ENCODE measurements at regions of chr12 and their contacts with region 1.

Region 1: GRCh38 chr12:49088190-49088931 is 6.2 kb downstream of the DHH start:
- DNase-seq: peak; percentile 60
- H3K4me3 ChIP-seq: peak overlapping the region; percentile 38
- H3K27ac ChIP-seq: no peak overlapping the region
- H3K4me1 ChIP-seq: peaks cover 55% of the 10 kb centered on the region
- H3K27me3 ChIP-seq: peaks cover 49% of the 10 kb centered on the region
- CTCF ChIP-seq: peak; percentile 93

Region 2: GRCh38 chr12:49121047-49121696 is 32.8 kb after region 1 on chr12:
- intact Hi-C with region 1: loop called (anchors 5 kb)
- DNase-seq: peak; percentile 32
- H3K4me3 ChIP-seq: no peak overlapping the region
- H3K27ac ChIP-seq: no peak overlapping the region
- H3K4me1 ChIP-seq: no peaks in the 10 kb centered on the region
- H3K27me3 ChIP-seq: no peaks in the 10 kb centered on the region
- CTCF ChIP-seq: peak; percentile 75

Region 3: DNA sequence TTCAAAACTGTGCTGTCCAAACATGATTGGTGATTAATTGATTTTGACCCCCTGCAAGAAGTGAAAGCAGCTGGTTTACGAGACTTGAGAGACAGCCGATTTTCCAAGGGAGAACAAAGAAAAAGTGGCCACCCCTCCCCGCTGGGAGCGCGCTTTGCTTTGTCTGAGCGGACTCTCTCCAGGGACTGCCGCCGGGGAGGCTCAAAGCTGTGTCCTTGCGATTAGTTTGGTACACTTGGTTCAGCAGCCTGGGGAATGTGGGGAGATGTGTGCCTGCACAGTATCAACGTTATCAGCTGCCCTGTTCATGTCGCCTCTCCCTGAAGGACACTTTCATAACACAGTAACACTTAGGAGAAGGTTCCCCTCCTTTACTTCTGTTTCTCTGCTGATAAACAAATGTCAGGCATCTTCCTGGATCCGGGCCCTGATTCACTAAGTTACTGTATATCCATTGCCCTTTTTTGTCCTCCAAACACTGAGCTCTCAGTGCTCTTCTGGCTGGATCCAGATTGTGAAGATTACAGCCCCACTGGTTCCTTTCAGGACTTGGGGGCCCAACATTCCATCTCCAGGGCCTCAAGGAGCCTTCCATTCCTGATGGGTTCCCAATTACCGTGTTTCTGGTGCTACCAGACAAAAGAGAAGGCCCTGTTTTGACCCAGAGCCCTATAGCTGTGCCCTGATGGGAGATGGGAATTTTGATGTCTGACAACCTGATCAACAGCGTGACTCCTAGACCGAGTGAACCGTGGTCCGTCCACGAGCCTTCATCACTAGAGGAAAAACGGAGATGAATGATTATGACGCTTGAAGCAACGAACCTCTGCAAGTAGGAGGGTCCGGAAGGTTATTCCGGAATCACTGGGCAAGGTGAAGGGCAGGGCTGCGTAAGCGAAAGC is 144.8 kb after region 1 on chr12:
- intact Hi-C with region 1: loop called (anchors 10 kb)
- DNase-seq: peak; percentile 75
- H3K4me3 ChIP-seq: peak overlapping the region; percentile 44
- H3K27ac ChIP-seq: peak overlapping the region; percentile 98
- H3K4me1 ChIP-seq: peaks cover 32% of the 10 kb centered on the region
- H3K27me3 ChIP-seq: no peaks in the 10 kb centered on the region
- CTCF ChIP-seq: peak; percentile 47

Measured in left ventricle myocardium inferior (tissue), 1 donor.